Gastrocnemius medialis (tissue), 4 donors: ENCODE measurements at regions of chr3 and their contacts with region 1.

Region 1: DNA sequence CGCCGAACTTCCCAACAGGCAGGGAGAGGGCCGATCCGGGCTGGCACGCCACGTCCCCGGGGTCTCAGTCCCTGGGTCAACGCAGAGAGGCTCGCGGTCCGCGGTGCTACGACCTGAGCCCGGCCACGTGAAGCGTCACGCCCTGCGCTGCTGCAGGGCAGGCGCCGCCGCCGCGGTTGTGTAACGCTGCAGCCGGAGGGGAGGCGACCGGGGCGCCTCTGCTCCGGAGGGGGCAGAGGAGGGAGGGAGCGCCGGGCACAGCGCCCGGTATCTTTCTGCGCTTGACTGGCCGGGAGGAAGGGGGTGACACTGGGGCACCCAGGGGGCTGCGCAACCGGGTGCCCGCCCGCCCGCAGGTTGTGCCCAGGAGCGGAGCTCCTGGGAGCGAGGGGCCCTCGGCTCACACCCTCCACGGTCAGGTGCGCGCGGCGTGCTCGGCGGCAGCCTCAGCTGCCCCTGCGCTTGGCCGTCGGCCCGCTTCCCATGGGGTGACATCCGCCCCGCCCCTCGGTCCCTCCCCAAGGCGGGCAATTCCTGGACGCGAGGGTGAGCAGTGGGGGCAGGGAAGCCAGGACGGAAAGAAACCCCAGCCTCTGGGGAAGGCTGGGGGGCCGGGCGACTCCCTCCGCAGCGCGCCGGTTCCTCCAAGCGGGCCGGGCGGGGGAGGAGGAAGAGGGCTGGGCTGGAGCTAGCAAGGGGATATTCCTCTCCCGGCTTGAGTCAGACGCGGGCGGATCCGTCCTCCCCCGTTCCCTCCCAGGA is 852 bp upstream of the BHLHE40 start:
- DNase-seq: peak; percentile 94 to 96
- ATAC-seq: peak; percentile 37 to 45
- H3K4me3 ChIP-seq: peak overlapping the region; percentile 69 to 95 (median 88)
- H3K27ac ChIP-seq: peak overlapping the region; percentile 96 to 100 (median 99)
- H3K4me1 ChIP-seq: peaks cover 17 to 39% of the 10 kb centered on the region in 2 donors
- H3K27me3 ChIP-seq: no peaks in the 10 kb centered on the region
- CTCF ChIP-seq: peak in 1 of 5 experiments; percentile 53
- POLR2A ChIP-seq: peak; percentile 54 to 74

Region 2: DNA sequence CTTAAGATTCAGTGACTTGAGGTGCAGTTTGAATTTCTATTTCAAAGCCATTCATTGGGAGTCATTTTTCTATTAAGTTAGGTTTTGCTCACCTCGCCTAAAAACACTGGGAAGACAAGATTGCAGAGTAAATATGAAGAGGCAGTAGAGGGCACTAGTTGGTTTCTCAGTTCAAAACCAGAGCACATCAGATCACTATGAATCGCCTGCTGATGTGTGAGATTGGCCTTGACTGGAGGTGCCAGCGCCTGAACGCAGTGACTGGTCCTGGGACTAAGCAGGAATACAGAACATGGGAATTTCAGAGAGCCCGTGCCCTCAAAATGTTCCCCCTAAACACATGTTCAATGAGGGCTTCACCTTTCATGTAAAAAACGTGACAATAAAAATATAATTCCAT is 256.3 kb before region 1 on chr3:
- in situ Hi-C with region 1: loop called in 3 of 4 experiments (anchors 5 to 10 kb)
- intact Hi-C with region 1: loop called (anchors 2 kb)
- DNase-seq: peak in 1 of 2 donors; percentile 58
- ATAC-seq: peak; percentile 75 to 84
- H3K4me3 ChIP-seq: no peak overlapping the region
- H3K27ac ChIP-seq: peak overlapping the region; percentile 33 to 81 (median 54)
- H3K4me1 ChIP-seq: peaks cover 46 to 51% of the 10 kb centered on the region in 2 donors
- H3K27me3 ChIP-seq: no peaks in the 10 kb centered on the region
- CTCF ChIP-seq: peak in 3 of 5 experiments; percentile 29 to 49 (median 41)
- POLR2A ChIP-seq: no peak

Region 3: DNA sequence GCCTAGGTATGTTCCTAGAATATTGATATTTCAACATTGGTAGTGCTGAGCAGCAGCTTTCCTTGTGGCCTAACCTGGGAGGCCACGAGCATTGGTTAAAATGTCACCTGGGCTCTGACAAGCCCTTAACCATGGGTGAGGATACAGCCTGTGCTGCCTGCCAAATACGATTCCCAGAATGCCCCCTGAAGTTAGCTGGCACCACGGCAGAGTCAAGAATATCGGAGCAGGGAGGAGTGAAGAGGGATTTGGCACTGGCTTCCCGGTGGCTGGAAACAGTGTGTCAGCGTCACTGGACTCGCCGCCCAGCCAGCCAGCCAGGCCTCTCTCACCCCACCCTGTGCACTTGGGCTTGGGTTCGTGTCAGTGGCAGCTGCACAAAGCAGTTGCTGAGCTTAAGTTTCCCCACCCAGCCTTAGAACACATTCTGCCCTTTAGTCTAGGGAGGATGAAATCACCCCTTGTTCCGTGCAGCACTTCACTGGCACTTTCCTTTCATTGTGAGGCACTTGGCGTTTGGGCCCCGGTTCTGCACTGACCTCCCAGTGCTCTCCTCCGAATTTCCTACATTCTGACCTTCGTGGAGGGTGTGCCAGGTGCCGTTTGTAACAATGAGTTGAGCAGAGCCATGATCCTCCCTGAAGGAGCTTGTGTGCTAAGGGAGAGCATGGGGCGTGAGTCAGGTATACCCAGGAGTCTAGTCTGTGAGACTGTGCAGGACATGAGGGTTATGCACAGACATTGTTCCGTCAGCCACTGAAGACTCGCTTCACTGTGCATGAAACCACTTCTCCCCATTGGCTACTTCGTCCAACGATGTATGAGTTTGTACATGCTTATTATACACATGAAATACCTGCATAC is 151.9 kb before region 1 on chr3:
- in situ Hi-C with region 1: no loop called
- intact Hi-C with region 1: loop called (anchors 2 kb)
- DNase-seq: peak; percentile 75 to 90
- ATAC-seq: peak; percentile 72 to 74
- H3K4me3 ChIP-seq: peak overlapping the region; percentile 12 to 36 (median 23)
- H3K27ac ChIP-seq: peak overlapping the region; percentile 80 to 89 (median 86)
- H3K4me1 ChIP-seq: peaks cover 48 to 67% of the 10 kb centered on the region in 2 donors
- H3K27me3 ChIP-seq: no peaks in the 10 kb centered on the region
- CTCF ChIP-seq: no peak
- POLR2A ChIP-seq: peak; percentile 67 to 83

Region 4: DNA sequence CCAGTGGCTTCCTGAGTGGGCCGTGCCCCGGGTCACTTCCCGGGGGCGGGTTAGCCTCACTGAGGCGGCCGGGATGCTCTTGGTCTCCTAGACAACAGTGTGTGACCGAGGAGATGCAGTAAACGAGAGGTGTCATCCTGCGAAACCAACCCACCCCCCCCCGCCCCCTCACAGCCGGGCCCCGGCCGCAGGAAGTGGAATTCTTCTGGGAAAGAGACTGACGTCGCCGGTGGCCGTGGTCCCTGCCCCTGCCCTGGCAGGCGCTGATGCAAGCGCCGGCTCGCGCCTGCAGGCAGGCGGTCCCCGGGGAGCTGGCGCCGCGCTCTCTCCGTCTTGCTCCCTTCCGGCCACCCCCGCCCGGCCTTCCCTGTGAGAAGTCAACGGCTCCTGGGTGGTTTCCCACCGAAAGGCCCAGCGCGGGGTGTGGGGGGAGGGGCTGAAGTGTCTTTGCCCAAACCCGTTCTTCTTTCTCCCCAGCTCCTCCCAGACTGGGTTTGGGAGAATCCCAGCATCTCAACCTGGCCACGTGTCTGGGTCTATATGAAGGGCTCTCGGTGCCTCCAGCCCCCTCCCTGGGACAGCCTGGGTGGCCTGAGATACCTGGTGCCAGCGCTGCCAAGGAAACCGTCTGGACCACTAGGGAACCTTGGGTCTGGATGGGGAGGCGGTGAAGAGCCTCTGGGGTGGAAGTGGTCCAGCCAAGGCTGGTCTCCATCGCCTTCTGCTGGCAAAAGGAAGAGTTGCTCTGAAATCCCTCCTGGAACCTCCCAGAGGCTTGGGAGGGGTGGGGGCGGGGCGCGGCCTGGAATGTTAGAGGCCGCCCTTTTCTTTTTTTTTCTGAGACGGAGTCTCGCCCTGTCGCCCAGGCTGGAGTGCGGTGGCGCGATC is 48.2 kb after region 1 on chr3:
- in situ Hi-C with region 1: loop called in 1 of 4 experiments (anchors 10 kb)
- intact Hi-C with region 1: loop called (anchors 1 kb)
- DNase-seq: peak; percentile 70 to 88
- ATAC-seq: peak; percentile 90
- H3K4me3 ChIP-seq: peak overlapping the region; percentile 59 to 84 (median 63)
- H3K27ac ChIP-seq: peak overlapping the region; percentile 74 to 89 (median 82)
- H3K4me1 ChIP-seq: peaks cover 9% of the 10 kb centered on the region in 2 donors
- H3K27me3 ChIP-seq: no peaks in the 10 kb centered on the region
- CTCF ChIP-seq: peak; percentile 57 to 84 (median 76)
- POLR2A ChIP-seq: peak; percentile 26 to 30

Region 5: GRCh38 chr3:5057857-5058324 is 79.5 kb after region 1 on chr3:
- in situ Hi-C with region 1: loop called in 1 of 4 experiments (anchors 5 kb)
- intact Hi-C with region 1: loop called (anchors 1 kb)
- DNase-seq: peak; percentile 57 to 79
- ATAC-seq: peak; percentile 73 to 82
- H3K4me3 ChIP-seq: no peak overlapping the region
- H3K27ac ChIP-seq: no peak overlapping the region
- H3K4me1 ChIP-seq: peaks cover 27 to 35% of the 10 kb centered on the region in 2 donors
- H3K27me3 ChIP-seq: no peaks in the 10 kb centered on the region
- CTCF ChIP-seq: peak; percentile 75 to 85 (median 79)
- POLR2A ChIP-seq: no peak

Region 6: DNA sequence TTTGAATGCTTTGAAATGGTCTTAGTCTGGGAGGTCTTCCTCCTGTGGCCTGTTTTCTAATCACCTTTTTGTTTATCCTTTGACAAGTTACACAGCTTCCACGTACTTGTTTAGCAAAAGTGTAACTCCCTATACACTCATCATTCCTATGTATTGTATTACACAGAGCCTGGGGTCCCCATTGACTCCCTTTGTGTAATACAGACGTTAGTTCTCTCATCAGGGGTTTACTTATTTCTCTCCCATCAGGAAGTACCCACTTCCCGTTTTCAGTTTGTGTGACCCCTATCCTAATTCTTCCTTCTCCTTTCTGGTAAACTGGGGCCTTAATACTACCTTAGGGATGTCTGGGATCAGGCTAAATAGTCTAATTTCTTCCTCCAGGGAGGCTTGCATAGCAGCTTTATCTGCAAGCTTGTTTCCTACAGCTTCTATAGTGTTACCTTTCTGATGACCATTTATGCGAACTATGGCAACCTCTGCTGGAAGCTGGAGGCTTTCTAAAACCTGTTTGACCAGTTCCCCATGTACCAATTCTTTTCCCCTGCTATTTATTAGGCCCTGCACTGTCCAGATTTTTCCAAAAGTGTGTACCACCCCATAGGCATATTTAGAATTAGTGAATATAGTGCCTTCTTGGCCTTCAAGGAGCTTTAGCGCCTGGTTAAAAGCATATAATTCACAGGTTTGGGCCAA is 166.1 kb after region 1 on chr3:
- in situ Hi-C with region 1: no loop called
- intact Hi-C with region 1: no loop called
- DNase-seq: no peak
- ATAC-seq: no peak
- H3K4me3 ChIP-seq: no peak overlapping the region
- H3K27ac ChIP-seq: no peak overlapping the region
- H3K4me1 ChIP-seq: peaks cover 39 to 44% of the 10 kb centered on the region in 2 donors
- H3K27me3 ChIP-seq: no peaks in the 10 kb centered on the region
- CTCF ChIP-seq: no peak
- POLR2A ChIP-seq: no peak

Region 7: GRCh38 chr3:5187156-5187919 is 209.0 kb after region 1 on chr3 and contains the start of gene EDEM1:
- in situ Hi-C with region 1: loop called in 1 of 4 experiments (anchors 25 kb)
- intact Hi-C with region 1: loop called (anchors 5 kb)
- DNase-seq: peak; percentile 93 to 96
- ATAC-seq: peak; percentile 81
- H3K4me3 ChIP-seq: peak within 1 kb of the TSS; percentile 85 to 94 (median 90)
- H3K27ac ChIP-seq: peak within 1 kb of the TSS; percentile 93 to 97 (median 96)
- H3K4me1 ChIP-seq: peaks cover 13 to 40% of the 10 kb centered on the region in 2 donors
- H3K27me3 ChIP-seq: no peaks in the 10 kb centered on the region
- CTCF ChIP-seq: no peak
- POLR2A ChIP-seq: peak; percentile 92 to 96
- total RNA-seq, gene EDEM1: 7.8 to 12.3 (median 11.4) TPM

Region 8: DNA sequence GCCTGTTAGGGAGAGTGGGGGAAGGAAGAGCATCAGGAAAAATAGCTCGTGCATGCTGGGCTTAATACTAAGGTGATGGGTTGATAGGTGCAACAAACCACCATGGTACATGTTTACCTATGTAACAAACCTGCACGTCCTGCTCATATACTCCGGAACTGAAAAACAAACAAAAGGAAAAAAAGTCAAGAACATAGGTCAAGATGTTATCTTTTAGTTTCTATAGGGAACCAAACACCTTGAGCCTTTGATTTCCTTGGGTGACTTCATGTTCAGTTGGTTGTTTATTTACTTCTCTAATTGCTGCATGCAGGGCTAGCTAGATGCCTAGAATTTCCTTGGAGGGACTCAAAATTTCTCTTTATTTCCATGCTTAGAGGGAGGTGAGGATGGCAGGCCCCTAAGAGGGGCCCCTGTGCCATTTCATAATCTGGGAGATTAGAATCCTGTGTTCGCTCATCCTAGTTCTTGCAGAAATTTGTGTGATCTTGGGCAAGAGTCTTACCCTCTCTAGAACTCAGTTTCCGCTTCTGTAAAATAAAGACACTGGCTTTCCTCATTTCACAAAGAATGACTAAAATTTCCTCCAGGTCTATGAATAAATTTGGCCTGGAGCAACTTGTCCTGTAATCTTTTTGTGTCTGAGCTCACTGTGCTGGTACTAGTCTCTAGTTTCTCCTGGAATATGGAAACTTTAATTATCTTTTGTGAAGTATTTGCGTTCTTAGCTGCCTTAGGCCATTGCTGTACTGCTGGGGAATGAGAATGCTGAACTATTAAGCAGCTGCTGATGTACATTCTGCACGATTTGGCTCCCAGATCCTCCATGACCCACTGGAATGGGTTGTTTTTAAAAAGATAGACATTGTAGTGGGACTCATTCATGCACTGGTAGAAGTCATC is 666.6 kb after region 1 on chr3:
- in situ Hi-C with region 1: no loop called
- intact Hi-C with region 1: no loop called
- DNase-seq: no peak
- ATAC-seq: no peak
- H3K4me3 ChIP-seq: no peak overlapping the region
- H3K27ac ChIP-seq: no peak overlapping the region
- H3K4me1 ChIP-seq: no peaks in the 10 kb centered on the region
- H3K27me3 ChIP-seq: no peaks in the 10 kb centered on the region
- CTCF ChIP-seq: no peak
- POLR2A ChIP-seq: no peak